GM13977 (cell line): ENCODE measurements at regions of chr3 and their contacts with region 1.

Region 1: GRCh38 chr3:151276687-151277042 is 1.7 kb downstream of the P2RY14 start:
- DNase-seq: no peak
- CTCF ChIP-seq: no peak

Region 2: DNA sequence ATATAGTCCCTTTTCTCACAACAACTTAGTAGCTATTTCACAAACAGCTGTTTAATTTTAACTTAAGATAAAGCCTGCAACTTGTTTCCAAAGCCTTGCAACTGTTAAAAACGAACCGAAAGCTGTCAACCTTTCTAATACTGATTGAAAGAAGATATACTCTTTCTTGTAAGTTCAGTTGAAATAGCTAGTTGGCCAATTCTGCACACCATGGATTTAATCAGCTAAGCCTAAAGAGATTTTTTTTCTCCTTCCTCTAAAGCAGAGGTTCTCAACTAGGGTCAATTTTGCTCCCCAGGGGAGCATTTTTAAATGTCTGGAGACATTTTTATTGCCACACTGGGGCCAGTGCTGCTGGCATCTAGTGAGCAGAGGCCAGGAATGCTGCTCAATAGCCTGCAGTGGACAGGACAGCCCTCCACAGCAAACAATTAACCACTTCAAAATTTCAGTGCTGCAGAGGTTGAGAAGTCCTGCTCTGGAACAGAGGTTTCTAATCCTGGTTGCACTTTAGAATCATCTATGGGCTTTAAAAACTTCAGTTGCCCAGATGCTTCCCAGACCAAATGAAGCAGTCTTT is 397.6 kb before region 1 on chr3:
- in situ Hi-C with region 1: no loop called
- DNase-seq: no peak
- CTCF ChIP-seq: no peak

Region 3: GRCh38 chr3:151168269-151169094 is 108.2 kb before region 1 on chr3:
- in situ Hi-C with region 1: loop called (anchors 5 kb)
- DNase-seq: peak; percentile 47
- CTCF ChIP-seq: peak; percentile 89

Region 4: DNA sequence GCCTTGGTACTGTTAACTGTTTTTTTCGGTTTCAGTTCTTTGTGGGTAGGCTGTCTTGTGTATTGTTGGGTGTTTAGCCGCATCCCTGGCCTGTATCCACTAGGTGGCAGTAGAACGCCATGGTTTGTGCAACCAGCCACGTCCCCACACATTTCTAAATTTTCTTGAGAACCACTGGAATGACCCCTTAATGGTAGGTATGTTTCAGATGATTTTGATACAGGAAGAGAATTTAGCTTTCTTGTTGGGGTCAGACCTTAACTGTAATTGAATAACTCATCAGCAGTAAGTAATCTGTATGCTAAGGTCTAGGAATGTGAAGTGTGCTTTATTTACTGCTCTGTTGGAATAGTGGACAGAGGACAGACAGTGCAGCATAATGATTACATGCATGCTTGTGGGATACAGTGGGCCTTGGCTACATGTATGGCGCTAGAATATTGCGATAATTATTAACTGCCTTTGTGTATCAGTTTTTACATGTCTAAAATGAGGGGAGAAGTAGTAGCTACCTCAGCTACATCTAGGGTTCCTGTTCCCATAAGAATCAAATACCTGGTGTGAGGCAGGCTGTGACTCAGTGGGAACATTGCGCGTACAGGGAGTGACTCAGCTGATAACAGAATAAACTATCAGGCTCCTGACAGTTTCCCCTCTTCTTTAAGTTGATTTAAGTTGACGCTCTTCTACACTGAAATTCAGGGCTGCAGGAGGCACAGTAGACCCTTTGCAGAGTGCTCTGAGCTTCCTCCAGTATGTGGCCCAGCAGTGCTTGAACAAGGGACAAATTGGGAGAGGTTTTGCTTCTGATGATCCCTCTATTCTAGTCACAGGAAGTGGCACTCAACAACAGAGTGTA is 48.6 kb before region 1 on chr3:
- in situ Hi-C with region 1: loop called (anchors 5 kb)
- DNase-seq: peak; percentile 78
- CTCF ChIP-seq: peak; percentile 88